Endothelial cell of umbilical vein (primary cell): ENCODE measurements at regions of chr2 and their contacts with region 1.

Region 1: GRCh38 chr2:128090945-128091725 is at the start of gene UGGT1:
- DNase-seq: peak; percentile 98
- H3K4me3 ChIP-seq: peak within 1 kb of the TSS; percentile 53 to 89 (median 87)
- H3K27ac ChIP-seq: peak within 1 kb of the TSS; percentile 56
- H3K4me1 ChIP-seq: peaks cover 5% of the 10 kb centered on the region
- H3K27me3 ChIP-seq: no peaks in the 10 kb centered on the region
- CTCF ChIP-seq: no peak
- POLR2A ChIP-seq: peak; percentile 96
- total RNA-seq, gene UGGT1: 77.5 and 83.2 TPM in 2 replicates

Region 2: GRCh38 chr2:127675331-127676261 is 415.5 kb before region 1 on chr2 and contains the start of gene LIMS2:
- CTCF ChIA-PET with region 1: no interaction called
- POLR2A ChIA-PET with region 1: no interaction called
- dilution Hi-C with region 1: no loop called
- intact Hi-C with region 1: no loop called
- DNase-seq: peak; percentile 36
- H3K4me3 ChIP-seq: peak within 1 kb of the TSS; percentile 48 to 58 (median 58)
- H3K27ac ChIP-seq: no peak within 1 kb of the TSS
- H3K4me1 ChIP-seq: peaks cover 18% of the 10 kb centered on the region
- H3K27me3 ChIP-seq: no peaks in the 10 kb centered on the region
- CTCF ChIP-seq: peak in 1 of 2 donors; percentile 37
- POLR2A ChIP-seq: no peak
- total RNA-seq, gene LIMS2: 45.7 and 48.3 TPM in 2 replicates

Region 3: DNA sequence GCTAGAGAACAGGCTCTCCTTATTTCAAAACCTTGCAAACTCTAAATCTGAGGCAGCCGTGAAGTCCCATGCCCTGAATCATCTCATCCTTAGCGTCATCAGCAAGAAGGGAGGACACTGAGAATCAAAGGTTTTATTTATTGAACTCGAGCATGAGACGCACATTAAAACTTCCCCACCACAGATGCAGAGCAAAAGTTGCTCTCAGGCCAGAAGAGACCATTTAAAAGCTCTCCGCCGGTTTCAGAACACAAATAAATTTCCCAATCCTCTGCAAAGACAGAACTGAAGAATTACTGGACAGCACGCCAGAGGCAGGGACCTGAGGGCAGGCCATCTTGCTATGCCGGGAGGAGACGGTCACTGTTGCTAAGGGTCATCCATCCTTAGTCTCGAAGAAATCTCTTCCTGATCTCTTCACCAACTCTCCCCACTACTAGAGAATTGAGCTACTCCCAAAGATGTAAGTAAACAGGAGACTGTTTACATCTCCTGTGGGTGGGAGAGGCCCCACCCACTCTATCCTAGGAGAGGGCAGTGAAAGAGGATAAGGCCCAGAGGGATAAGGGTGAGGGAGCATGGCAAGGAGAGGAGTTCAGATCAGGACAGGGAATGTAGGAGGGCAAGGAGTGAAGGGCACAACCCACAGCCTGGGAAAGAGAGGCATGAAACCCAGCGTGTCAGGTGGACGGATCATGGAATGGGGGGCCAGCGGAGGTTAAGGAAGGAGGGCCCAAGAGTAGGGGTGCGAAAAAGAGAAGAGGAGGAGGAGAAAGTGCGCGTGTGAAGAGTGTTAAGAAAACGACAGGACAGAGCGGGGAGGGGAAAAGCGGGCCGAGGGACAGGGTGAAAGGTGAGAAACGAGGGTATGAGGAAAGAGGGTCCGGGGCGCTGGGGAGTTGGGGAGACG is 206.4 kb before region 1 on chr2:
- CTCF ChIA-PET with region 1: no interaction called
- POLR2A ChIA-PET with region 1: no interaction called
- dilution Hi-C with region 1: no loop called
- intact Hi-C with region 1: loop called (anchors 10 kb)
- DNase-seq: peak; percentile 24
- H3K4me3 ChIP-seq: peak overlapping the region; percentile 12 to 77 (median 53)
- H3K27ac ChIP-seq: peak overlapping the region; percentile 25
- H3K4me1 ChIP-seq: peaks cover 19% of the 10 kb centered on the region
- H3K27me3 ChIP-seq: no peaks in the 10 kb centered on the region
- CTCF ChIP-seq: no peak
- POLR2A ChIP-seq: no peak

Region 4: GRCh38 chr2:128027801-128028667 is 63.1 kb before region 1 on chr2 and contains the start of gene SAP130:
- CTCF ChIA-PET with region 1: interaction called, 3 read pairs
- POLR2A ChIA-PET with region 1: interaction called, 4 read pairs
- dilution Hi-C with region 1: no loop called
- intact Hi-C with region 1: loop called (anchors 1 kb)
- DNase-seq: peak; percentile 96
- H3K4me3 ChIP-seq: peak within 1 kb of the TSS; percentile 89 to 96 (median 91)
- H3K27ac ChIP-seq: peak within 1 kb of the TSS; percentile 67
- H3K4me1 ChIP-seq: peaks cover 6% of the 10 kb centered on the region
- H3K27me3 ChIP-seq: no peaks in the 10 kb centered on the region
- CTCF ChIP-seq: no peak
- POLR2A ChIP-seq: no peak
- total RNA-seq, gene SAP130: 30.4 and 34.3 TPM in 2 replicates

Region 5: GRCh38 chr2:128062571-128062970 is 28.6 kb before region 1 on chr2:
- CTCF ChIA-PET with region 1: interaction called, 27 read pairs
- POLR2A ChIA-PET with region 1: interaction called, 3 read pairs
- dilution Hi-C with region 1: no loop called
- intact Hi-C with region 1: no loop called
- DNase-seq: no peak
- H3K4me3 ChIP-seq: no peak overlapping the region
- H3K27ac ChIP-seq: no peak overlapping the region
- H3K4me1 ChIP-seq: no peaks in the 10 kb centered on the region
- H3K27me3 ChIP-seq: peaks cover 0 to 2% of the 10 kb centered on the region in 2 experiments
- CTCF ChIP-seq: no peak
- POLR2A ChIP-seq: no peak

Region 6: GRCh38 chr2:128108166-128108565 is 17.0 kb after region 1 on chr2:
- CTCF ChIA-PET with region 1: interaction called, 10 read pairs
- POLR2A ChIA-PET with region 1: interaction called, 3 read pairs
- dilution Hi-C with region 1: no loop called
- intact Hi-C with region 1: no loop called
- DNase-seq: no peak
- H3K4me3 ChIP-seq: no peak overlapping the region
- H3K27ac ChIP-seq: no peak overlapping the region
- H3K4me1 ChIP-seq: no peaks in the 10 kb centered on the region
- H3K27me3 ChIP-seq: no peaks in the 10 kb centered on the region
- CTCF ChIP-seq: no peak
- POLR2A ChIP-seq: no peak

Region 7: DNA sequence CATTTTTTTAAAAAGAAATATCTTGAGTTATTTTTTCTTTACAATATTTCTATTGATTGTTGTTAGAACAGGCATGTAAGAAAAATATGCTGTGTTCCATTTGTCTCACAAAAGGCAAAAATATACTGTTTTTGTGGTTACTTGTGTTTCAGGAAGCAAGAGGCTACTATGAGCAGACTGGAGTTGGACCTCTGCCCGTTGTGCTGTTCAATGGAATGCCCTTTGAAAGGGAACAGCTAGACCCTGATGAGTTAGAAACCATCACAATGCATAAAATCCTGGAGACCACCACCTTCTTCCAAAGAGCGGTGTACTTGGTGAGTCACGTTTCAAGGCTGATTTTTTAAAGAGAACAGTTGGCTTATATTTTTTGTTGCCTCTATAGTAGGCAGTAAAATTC is 54.5 kb after region 1 on chr2:
- CTCF ChIA-PET with region 1: no interaction called
- POLR2A ChIA-PET with region 1: no interaction called
- dilution Hi-C with region 1: no loop called
- intact Hi-C with region 1: no loop called
- DNase-seq: peak; percentile 51
- H3K4me3 ChIP-seq: no peak overlapping the region
- H3K27ac ChIP-seq: no peak overlapping the region
- H3K4me1 ChIP-seq: no peaks in the 10 kb centered on the region
- H3K27me3 ChIP-seq: no peaks in the 10 kb centered on the region
- CTCF ChIP-seq: no peak
- POLR2A ChIP-seq: no peak

Region 8: GRCh38 chr2:128232965-128233789 is 142.0 kb after region 1 on chr2:
- CTCF ChIA-PET with region 1: no interaction called
- POLR2A ChIA-PET with region 1: no interaction called
- dilution Hi-C with region 1: no loop called
- intact Hi-C with region 1: loop called (anchors 1 kb)
- DNase-seq: peak; percentile 72
- H3K4me3 ChIP-seq: peak overlapping the region; percentile 52 to 70 (median 57)
- H3K27ac ChIP-seq: no peak overlapping the region
- H3K4me1 ChIP-seq: peaks cover 13% of the 10 kb centered on the region
- H3K27me3 ChIP-seq: no peaks in the 10 kb centered on the region
- CTCF ChIP-seq: peak; percentile 83 to 98
- POLR2A ChIP-seq: no peak

Region 9: GRCh38 chr2:128250229-128251025 is 159.3 kb after region 1 on chr2:
- CTCF ChIA-PET with region 1: no interaction called
- POLR2A ChIA-PET with region 1: interaction called, 11 read pairs
- dilution Hi-C with region 1: no loop called
- intact Hi-C with region 1: no loop called
- DNase-seq: no peak
- H3K4me3 ChIP-seq: no peak overlapping the region
- H3K27ac ChIP-seq: no peak overlapping the region
- H3K4me1 ChIP-seq: no peaks in the 10 kb centered on the region
- H3K27me3 ChIP-seq: peaks cover 2 to 4% of the 10 kb centered on the region in 2 experiments
- CTCF ChIP-seq: no peak
- POLR2A ChIP-seq: no peak

Region 10: DNA sequence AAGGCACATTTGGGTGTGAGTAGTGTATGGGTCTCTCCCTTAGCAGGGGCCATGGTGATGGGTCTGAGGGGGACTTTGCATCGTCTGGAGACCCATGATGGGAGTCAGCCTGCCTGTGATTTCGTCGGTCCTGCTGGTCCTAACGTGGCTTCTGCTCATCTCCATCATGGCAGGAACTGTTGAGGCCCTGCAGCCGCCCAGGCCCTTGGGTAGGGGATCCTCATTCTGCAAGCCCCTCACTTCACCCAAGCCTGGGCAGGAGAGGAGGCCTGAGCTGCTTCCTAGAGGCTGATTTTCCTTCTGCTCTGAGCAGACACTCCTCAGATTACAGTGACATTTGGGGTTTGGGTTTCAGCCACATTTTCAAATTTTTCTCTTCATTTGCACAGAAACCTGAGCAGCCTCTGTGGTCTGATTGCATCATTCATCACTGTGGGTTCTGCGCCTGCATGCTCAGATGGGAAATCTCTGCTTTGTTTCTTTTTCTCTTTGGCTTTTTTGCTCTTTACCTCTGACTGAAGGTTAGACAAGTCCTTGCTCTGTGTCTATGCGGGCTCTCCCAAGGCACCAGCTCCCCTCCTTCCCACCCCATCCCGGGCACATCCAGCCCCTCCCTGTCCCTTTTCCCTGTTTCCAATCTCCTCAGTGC is 532.8 kb after region 1 on chr2:
- CTCF ChIA-PET with region 1: no interaction called
- POLR2A ChIA-PET with region 1: no interaction called
- dilution Hi-C with region 1: no loop called
- intact Hi-C with region 1: no loop called
- DNase-seq: no peak
- H3K4me3 ChIP-seq: no peak overlapping the region
- H3K27ac ChIP-seq: no peak overlapping the region
- H3K4me1 ChIP-seq: no peaks in the 10 kb centered on the region
- H3K27me3 ChIP-seq: no peaks in the 10 kb centered on the region
- CTCF ChIP-seq: no peak
- POLR2A ChIP-seq: no peak